ENCODE measurements at regions of chr6 and their contacts with region 1.

Region 1: DNA sequence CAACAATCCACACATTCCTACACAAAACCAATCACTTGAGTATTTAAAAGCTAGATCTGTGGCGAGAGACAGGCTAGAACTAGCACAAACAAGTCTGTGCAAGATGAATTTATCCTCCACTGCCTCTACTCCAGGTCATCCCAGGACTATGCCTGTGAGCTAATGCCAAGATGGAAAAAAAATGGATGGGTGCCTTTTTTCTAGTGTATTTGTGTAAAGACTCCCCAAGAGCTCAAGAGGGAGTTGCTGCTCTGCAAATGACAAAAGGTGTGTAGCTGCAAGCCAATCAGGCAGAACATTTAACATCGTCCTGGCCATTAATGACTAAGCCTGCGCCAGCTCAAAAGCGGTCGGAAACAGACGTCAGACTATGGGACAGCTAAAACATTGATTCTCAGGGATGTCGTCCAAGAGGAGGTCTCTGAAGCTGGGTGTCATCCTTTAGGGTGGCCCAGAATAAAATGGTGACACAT is 21.9 kb downstream of the ATXN1 start:
- DNase-seq: peak; percentile 76
- ATAC-seq: peak; percentile 57
- H3K4me3 ChIP-seq: no peak overlapping the region
- H3K27ac ChIP-seq: peak overlapping the region; percentile 8; the same call in 1 of the 2 replicates
- H3K4me1 ChIP-seq: peaks cover 18% of the 10 kb centered on the region
- H3K27me3 ChIP-seq: no peaks in the 10 kb centered on the region
- CTCF ChIP-seq: 0 out of 2 replicates have a peak, but pooled peaks have one; percentile 14
- POLR2A ChIP-seq: no peak
- RAD21 ChIP-seq: 0 out of 2 replicates have a peak, but pooled peaks have one; percentile 18

Region 2: GRCh38 chr6:16723826-16724225 is 15.5 kb before region 1 on chr6:
- CTCF ChIA-PET with region 1: interaction called, 3 read pairs
- POLR2A ChIA-PET with region 1: no interaction called
- dilution Hi-C with region 1: no loop called
- in situ Hi-C with region 1: no loop called
- intact Hi-C with region 1: loop called (anchors 1 kb)
- DNase-seq: peak; percentile 96
- ATAC-seq: peak; percentile 73
- H3K4me3 ChIP-seq: no peak overlapping the region
- H3K27ac ChIP-seq: peak overlapping the region; percentile 66; the same call in 1 of the 2 replicates
- H3K4me1 ChIP-seq: peaks cover 19% of the 10 kb centered on the region
- H3K27me3 ChIP-seq: no peaks in the 10 kb centered on the region
- CTCF ChIP-seq: no peak
- POLR2A ChIP-seq: no peak
- RAD21 ChIP-seq: no peak; the same call in 1 of the 2 replicates